A673 (cell line): ENCODE measurements at regions of chr12 and their contacts with region 1.

Region 1: GRCh38 chr12:21697904-21698630 is 40.4 kb upstream of the LDHB start:
- DNase-seq: peak; percentile 40
- H3K4me3 ChIP-seq: no peak overlapping the region
- H3K27ac ChIP-seq: no peak overlapping the region
- H3K4me1 ChIP-seq: no peaks in the 10 kb centered on the region
- H3K27me3 ChIP-seq: peaks cover 38% of the 10 kb centered on the region
- CTCF ChIP-seq: peak; percentile 78

Region 2: GRCh38 chr12:21129906-21130305 is 568.2 kb before region 1 on chr12:
- CTCF ChIA-PET with region 1: no interaction called
- POLR2A ChIA-PET with region 1: no interaction called
- intact Hi-C with region 1: no loop called
- DNase-seq: no peak
- H3K4me3 ChIP-seq: no peak overlapping the region
- H3K27ac ChIP-seq: no peak overlapping the region
- H3K4me1 ChIP-seq: no peaks in the 10 kb centered on the region
- H3K27me3 ChIP-seq: no peaks in the 10 kb centered on the region
- CTCF ChIP-seq: no peak

Region 3: DNA sequence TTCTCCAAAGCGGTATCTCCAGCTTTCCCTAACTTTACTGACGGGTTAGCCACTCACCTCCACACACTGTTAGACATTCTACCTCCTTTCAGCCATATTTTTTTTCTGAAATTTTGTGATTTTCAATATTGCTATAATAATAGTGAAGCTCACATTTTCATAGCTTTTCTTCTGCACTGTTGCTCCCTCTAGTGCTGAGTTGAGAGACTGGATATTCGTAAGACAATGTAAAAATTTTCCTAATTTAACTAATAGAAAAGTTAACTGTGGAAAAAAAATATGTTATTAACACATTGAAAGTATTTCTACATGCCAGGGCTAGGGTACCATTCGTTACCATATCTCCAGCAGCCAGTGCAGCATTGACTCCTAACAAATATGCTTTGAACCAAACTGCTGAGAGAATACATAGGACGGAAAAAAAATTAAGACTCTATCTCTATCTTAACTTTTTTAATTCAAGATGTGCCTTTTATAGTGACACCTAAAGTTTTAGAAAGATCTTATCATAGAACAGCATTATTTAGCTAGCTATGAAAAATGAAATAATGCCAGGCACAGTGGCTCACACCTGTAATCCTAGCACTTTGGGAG is 291.8 kb after region 1 on chr12:
- CTCF ChIA-PET with region 1: interaction called, 36 read pairs
- POLR2A ChIA-PET with region 1: no interaction called
- intact Hi-C with region 1: loop called (anchors 2 kb)
- DNase-seq: peak; percentile 23
- H3K4me3 ChIP-seq: no peak overlapping the region
- H3K27ac ChIP-seq: no peak overlapping the region
- H3K4me1 ChIP-seq: no peaks in the 10 kb centered on the region
- H3K27me3 ChIP-seq: peaks cover 20% of the 10 kb centered on the region
- CTCF ChIP-seq: peak; percentile 67

Region 4: DNA sequence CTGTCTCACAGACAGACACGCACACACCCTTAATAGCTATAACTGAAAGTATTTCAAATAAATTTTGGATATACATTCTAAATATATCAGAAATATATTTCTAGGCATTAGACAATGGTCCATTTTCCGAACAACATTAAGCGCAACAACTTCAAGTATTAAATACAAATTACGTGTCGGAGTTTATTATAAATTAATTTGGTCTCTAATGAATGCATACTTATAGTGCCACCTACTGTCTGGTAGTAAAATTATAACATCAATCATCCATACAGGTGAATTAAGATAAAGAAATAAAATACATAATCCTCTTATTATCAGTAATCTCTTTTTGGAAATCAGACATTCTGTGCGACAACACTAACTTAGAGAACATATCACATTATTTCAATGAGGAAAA is 320.8 kb after region 1 on chr12:
- CTCF ChIA-PET with region 1: interaction called, 12 read pairs
- POLR2A ChIA-PET with region 1: no interaction called
- intact Hi-C with region 1: loop called (anchors 1 kb)
- DNase-seq: no peak
- H3K4me3 ChIP-seq: no peak overlapping the region
- H3K27ac ChIP-seq: no peak overlapping the region
- H3K4me1 ChIP-seq: no peaks in the 10 kb centered on the region
- H3K27me3 ChIP-seq: no peaks in the 10 kb centered on the region
- CTCF ChIP-seq: peak; percentile 56

Region 5: GRCh38 chr12:22334410-22335290 is 636.6 kb after region 1 on chr12 and contains the start of gene ST8SIA1:
- CTCF ChIA-PET with region 1: no interaction called
- POLR2A ChIA-PET with region 1: no interaction called
- intact Hi-C with region 1: loop called (anchors 10 kb)
- DNase-seq: peak; percentile 22
- H3K4me3 ChIP-seq: peak within 1 kb of the TSS; percentile 49
- H3K27ac ChIP-seq: no peak within 1 kb of the TSS
- H3K4me1 ChIP-seq: peaks cover 4% of the 10 kb centered on the region
- H3K27me3 ChIP-seq: peaks cover 52% of the 10 kb centered on the region
- CTCF ChIP-seq: no peak
- total RNA-seq, gene ST8SIA1: 0.17 and 0.28 TPM in 2 replicates

Region 6: GRCh38 chr12:22443379-22444316 is 745.6 kb after region 1 on chr12:
- CTCF ChIA-PET with region 1: interaction called, 11 read pairs
- POLR2A ChIA-PET with region 1: no interaction called
- intact Hi-C with region 1: loop called (anchors 1 kb)
- DNase-seq: peak; percentile 86
- H3K4me3 ChIP-seq: no peak overlapping the region
- H3K27ac ChIP-seq: no peak overlapping the region
- H3K4me1 ChIP-seq: no peaks in the 10 kb centered on the region
- H3K27me3 ChIP-seq: no peaks in the 10 kb centered on the region
- CTCF ChIP-seq: peak; percentile 83

Region 7: GRCh38 chr12:22491034-22491433 is 793.0 kb after region 1 on chr12:
- CTCF ChIA-PET with region 1: no interaction called
- POLR2A ChIA-PET with region 1: no interaction called
- intact Hi-C with region 1: no loop called
- DNase-seq: no peak
- H3K4me3 ChIP-seq: no peak overlapping the region
- H3K27ac ChIP-seq: no peak overlapping the region
- H3K4me1 ChIP-seq: no peaks in the 10 kb centered on the region
- H3K27me3 ChIP-seq: no peaks in the 10 kb centered on the region
- CTCF ChIP-seq: no peak